ENCODE measurements at regions of chr15 and their contacts with region 1.

Region 1: GRCh38 chr15:55846116-55846707 is 103.3 kb upstream of the PRTG start:
- DNase-seq: no peak
- ATAC-seq: peak; percentile 29 to 53
- H3K4me3 ChIP-seq: no peak overlapping the region
- H3K27ac ChIP-seq: no peak overlapping the region
- H3K4me1 ChIP-seq: no peaks in the 10 kb centered on the region
- H3K27me3 ChIP-seq: no peaks in the 10 kb centered on the region

Region 2: GRCh38 chr15:55564347-55565145 is 281.7 kb before region 1 on chr15:
- intact Hi-C with region 1: no loop called
- DNase-seq: no peak
- ATAC-seq: no peak
- H3K4me3 ChIP-seq: no peak overlapping the region
- H3K27ac ChIP-seq: no peak overlapping the region
- H3K4me1 ChIP-seq: no peaks in the 10 kb centered on the region
- H3K27me3 ChIP-seq: no peaks in the 10 kb centered on the region

Region 3: GRCh38 chr15:55649054-55649423 is 197.2 kb before region 1 on chr15:
- intact Hi-C with region 1: loop called in 3 of 4 experiments (anchors 5 to 10 kb)
- DNase-seq: no peak
- ATAC-seq: no peak
- H3K4me3 ChIP-seq: no peak overlapping the region
- H3K27ac ChIP-seq: no peak overlapping the region
- H3K4me1 ChIP-seq: no peaks in the 10 kb centered on the region
- H3K27me3 ChIP-seq: no peaks in the 10 kb centered on the region

Region 4: DNA sequence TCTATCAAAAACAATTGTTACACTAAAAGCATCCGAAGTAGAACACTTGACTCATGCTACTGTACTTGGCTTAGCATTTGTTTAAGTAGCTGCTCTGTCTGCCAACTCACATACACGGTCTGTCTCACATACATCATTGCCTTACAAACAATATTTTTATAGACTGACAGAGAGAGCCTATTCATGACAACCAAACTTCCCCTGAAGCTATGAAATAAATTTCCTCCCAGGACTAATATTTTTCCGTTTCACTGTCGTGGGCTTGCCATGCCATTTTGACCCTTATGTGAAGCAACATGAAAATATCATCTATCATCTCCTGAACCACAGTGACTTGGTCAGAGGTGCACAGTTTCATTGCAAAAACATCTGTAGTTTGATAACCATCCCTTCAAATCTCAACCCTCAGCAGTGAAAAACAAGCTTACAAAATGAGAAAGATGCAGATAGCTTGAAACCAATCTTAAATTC is 191.6 kb before region 1 on chr15:
- intact Hi-C with region 1: loop called in 3 of 4 experiments (anchors 5 to 10 kb)
- DNase-seq: no peak
- ATAC-seq: no peak
- H3K4me3 ChIP-seq: no peak overlapping the region
- H3K27ac ChIP-seq: no peak overlapping the region
- H3K4me1 ChIP-seq: no peaks in the 10 kb centered on the region
- H3K27me3 ChIP-seq: no peaks in the 10 kb centered on the region

Region 5: GRCh38 chr15:55669270-55669669 is 176.9 kb before region 1 on chr15:
- intact Hi-C with region 1: no loop called
- DNase-seq: no peak
- ATAC-seq: no peak
- H3K4me3 ChIP-seq: no peak overlapping the region
- H3K27ac ChIP-seq: no peak overlapping the region
- H3K4me1 ChIP-seq: no peaks in the 10 kb centered on the region
- H3K27me3 ChIP-seq: no peaks in the 10 kb centered on the region

Measured in right cardiac atrium (tissue), 5 donors.